ENCODE measurements at regions of chr11 and their contacts with region 1.

Region 1: GRCh38 chr11:74390697-74391096 is 7.5 kb downstream of the PGM2L1 start:
- DNase-seq: no peak
- H3K4me3 ChIP-seq: no peak overlapping the region
- H3K27ac ChIP-seq: no peak overlapping the region
- H3K4me1 ChIP-seq: peaks cover 0 to 25% (median 0%) of the 10 kb centered on the region in 6 donors
- H3K27me3 ChIP-seq: no peaks in the 10 kb centered on the region
- CTCF ChIP-seq: no peak
- POLR2A ChIP-seq: no peak

Region 2: DNA sequence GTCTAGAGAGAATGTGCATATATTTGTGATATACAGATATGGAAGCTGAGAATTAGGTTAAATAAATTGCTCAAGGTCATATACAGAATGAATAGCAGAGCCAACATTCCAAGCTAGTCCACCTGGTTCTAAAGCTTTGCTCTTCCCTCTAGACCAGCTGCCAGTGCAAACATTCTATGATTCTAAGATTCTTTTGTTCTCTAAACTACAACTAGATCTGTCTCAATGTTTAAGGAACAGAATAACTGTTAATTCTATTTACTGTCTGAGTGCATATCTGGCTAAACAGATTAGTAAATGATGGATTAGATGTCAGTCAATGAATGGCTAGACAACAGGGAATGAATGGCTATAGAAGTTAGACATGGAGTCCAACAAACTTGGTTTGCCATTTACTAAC is 57.0 kb after region 1 on chr11:
- intact Hi-C with region 1: loop called (anchors 1 kb)
- DNase-seq: no peak
- H3K4me3 ChIP-seq: no peak overlapping the region
- H3K27ac ChIP-seq: no peak overlapping the region
- H3K4me1 ChIP-seq: peaks cover 0 to 15% (median 9%) of the 10 kb centered on the region in 6 donors
- H3K27me3 ChIP-seq: peaks cover 0 to 6% (median 0%) of the 10 kb centered on the region in 7 donors
- CTCF ChIP-seq: no peak
- POLR2A ChIP-seq: no peak

Measured in spleen (tissue), 13 donors.